Transverse colon (tissue), 4 donors: ENCODE measurements at regions of chr5 and their contacts with region 1.

Region 1: DNA sequence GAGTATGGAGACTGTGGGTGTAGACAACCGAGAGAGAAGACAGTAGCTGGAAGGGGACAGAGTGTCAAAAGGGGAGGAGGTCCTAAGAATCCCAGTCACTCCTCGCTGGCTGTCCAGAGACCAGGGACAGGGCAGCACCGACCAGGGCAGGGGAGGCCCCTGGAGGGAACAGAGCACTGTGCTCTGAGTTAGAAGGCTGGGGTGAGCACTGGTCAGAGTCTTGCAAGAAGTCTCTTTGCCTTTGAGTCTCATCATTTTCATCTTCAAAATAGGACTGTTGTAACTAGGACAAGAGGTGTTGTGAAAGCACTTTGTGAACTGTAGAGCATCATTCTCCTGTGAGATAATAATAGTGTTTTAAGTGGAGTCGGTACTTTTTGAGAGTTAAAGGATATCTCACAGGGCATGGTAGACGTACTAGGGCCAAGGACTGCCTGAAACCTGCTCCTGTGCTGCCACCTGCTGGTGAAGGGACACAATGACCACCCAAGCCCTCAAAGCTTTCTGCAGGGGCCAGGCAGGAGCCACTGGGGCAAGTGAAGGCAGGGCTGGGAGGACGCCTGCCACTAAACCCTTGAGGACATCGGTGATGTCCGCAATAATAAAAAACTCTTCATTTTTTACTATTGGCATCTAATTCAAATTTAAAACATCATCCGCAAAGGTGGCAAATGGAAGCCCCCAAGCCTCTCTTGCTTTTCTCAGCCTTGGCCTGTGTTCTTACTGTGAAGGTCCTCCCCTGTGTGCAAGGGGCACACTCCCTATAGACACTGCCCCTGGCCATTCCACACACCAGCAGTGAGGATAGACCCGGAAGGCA is 28.2 kb downstream of the SLC6A7 start:
- DNase-seq: peak; percentile 90
- H3K4me3 ChIP-seq: no peak overlapping the region
- H3K27ac ChIP-seq: peak overlapping the region in 3 of 4 donors; percentile 65 to 79 (median 72)
- H3K4me1 ChIP-seq: peaks cover 19 to 33% (median 28%) of the 10 kb centered on the region in 4 donors
- H3K27me3 ChIP-seq: no peaks in the 10 kb centered on the region
- CTCF ChIP-seq: peak; percentile 89 to 96 (median 94)
- EP300 ChIP-seq: no peak
- POLR2A ChIP-seq: no peak

Region 2: GRCh38 chr5:150129813-150130492 is 88.1 kb before region 1 on chr5:
- in situ Hi-C with region 1: no loop called
- intact Hi-C with region 1: loop called (anchors 2 kb)
- DNase-seq: peak; percentile 79
- H3K4me3 ChIP-seq: no peak overlapping the region
- H3K27ac ChIP-seq: peak overlapping the region in 1 of 4 donors; percentile 4
- H3K4me1 ChIP-seq: peaks cover 3 to 18% (median 16%) of the 10 kb centered on the region in 4 donors
- H3K27me3 ChIP-seq: no peaks in the 10 kb centered on the region
- CTCF ChIP-seq: peak; percentile 92 to 95 (median 94)
- EP300 ChIP-seq: no peak
- POLR2A ChIP-seq: no peak

Region 3: DNA sequence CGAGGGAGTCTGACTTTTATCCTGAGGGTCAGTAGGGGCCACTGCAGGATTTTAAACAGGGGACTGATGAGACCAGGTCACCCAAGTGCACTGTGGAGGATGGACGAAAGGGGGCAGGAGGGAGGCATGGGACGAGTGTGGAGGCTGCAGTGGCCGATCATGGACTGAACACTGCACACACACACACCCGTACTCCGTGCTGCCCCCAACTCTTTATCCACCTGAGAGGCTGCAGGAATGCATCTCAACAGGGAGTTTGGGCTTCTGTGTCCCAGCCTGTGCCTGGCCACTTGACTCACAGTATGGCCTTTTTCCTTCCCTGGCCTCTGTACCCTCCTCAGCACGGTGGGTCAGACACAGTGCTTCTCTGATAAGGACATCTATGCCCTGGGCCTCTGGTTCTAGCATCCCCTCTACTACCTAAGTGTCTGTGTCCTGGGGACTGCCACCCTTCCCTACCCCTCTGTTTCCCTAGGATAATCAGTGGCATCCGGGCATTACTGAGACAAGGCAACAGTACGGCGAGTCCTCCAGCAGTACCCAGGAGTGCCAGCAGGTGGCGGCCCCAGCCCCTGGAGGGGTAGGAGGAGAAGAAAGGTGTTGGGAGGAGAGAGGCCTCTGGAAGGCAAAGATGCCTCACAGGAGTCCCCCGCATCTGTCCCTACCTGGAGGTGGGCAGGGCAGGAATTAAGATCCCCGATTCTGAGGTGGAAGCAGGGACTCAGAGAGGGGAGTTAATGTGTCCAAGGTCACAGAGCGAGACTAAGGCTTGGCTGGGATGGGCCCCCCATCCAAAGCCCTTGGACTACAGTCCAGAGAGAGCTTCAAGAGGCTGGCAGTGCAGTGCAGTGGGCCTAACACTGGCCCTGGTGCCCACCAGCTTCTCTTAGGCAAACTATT is 56.6 kb before region 1 on chr5:
- in situ Hi-C with region 1: loop called in 2 of 4 experiments (anchors 5 kb)
- intact Hi-C with region 1: no loop called
- DNase-seq: peak; percentile 95
- H3K4me3 ChIP-seq: peak overlapping the region in 1 of 4 donors; percentile 18
- H3K27ac ChIP-seq: peak overlapping the region; percentile 87 to 96 (median 91)
- H3K4me1 ChIP-seq: peaks cover 24 to 51% (median 41%) of the 10 kb centered on the region in 4 donors
- H3K27me3 ChIP-seq: no peaks in the 10 kb centered on the region
- CTCF ChIP-seq: peak; percentile 89 to 99 (median 93)
- EP300 ChIP-seq: no peak
- POLR2A ChIP-seq: no peak

Region 4: DNA sequence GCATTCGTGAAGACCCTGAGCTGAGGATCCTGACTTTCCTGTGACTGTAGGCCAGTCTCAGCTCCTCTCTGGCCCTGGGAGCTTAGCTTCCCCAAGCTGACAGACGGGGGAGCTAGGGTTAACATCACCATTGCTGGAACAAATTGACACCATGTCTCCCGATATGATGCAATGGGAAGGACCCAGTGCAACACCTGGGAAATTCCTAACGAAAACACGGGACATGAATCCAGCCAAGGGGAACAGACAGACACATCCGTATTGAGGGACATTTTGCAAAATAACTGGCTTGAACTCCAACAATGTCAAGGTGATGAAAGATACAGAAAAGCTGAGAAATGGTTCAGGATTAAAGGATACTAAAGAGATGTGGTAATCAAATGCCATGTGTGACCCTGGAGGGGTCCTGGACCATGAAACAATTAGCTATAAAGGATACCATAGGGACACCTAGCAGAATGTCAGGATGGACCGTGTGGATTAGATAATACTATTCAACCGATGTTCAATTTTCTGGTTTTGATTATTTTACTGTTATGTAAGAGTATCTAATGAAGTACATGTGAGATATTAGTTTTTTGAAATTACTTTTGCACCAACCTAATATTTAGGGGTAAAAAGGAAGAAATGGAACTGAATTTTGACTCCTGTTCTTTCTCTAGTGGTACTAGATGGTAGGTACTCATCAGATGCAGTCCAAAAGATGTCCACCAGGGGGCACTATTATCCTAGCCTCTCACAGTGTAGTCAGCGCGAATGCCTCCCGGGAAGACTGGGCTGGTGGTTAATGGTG is 342.5 kb after region 1 on chr5:
- in situ Hi-C with region 1: no loop called
- intact Hi-C with region 1: no loop called
- DNase-seq: peak; percentile 93
- H3K4me3 ChIP-seq: no peak overlapping the region
- H3K27ac ChIP-seq: no peak overlapping the region
- H3K4me1 ChIP-seq: peaks cover 0 to 10% (median 0%) of the 10 kb centered on the region in 4 donors
- H3K27me3 ChIP-seq: no peaks in the 10 kb centered on the region
- CTCF ChIP-seq: peak; percentile 93 to 99 (median 97)
- EP300 ChIP-seq: no peak
- POLR2A ChIP-seq: no peak